Esophagus squamous epithelium (tissue), 5 donors: ENCODE measurements at regions of chr11 and their contacts with region 1.

Region 1: GRCh38 chr11:65512306-65512705 is 12.6 kb upstream of the SCYL1 start:
- DNase-seq: no peak
- H3K4me3 ChIP-seq: no peak overlapping the region
- H3K27ac ChIP-seq: no peak overlapping the region
- H3K4me1 ChIP-seq: peaks cover 0 to 33% (median 14%) of the 10 kb centered on the region in 3 donors
- H3K27me3 ChIP-seq: no peaks in the 10 kb centered on the region
- CTCF ChIP-seq: no peak
- POLR2A ChIP-seq: no peak

Region 2: DNA sequence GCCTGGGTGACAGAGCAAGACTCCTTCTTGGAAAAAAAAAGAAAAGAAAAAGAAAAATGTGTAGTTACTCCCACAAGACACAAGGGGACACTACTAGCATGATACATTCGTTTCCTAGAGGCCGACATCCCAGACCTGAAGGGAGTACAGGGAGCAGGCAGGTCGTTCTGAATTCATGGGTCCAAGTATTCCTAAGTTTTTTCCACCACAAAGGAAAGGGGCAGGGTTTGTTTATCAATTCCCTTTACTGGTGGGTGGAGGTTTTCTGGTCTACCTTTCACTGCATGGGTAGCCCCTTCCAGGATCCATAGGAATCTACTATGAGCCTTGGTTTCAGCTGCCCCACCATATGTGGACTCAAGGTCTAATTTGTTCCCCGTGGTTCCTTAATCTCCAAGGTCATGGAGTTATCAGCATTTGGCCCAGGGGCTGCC is 145.9 kb before region 1 on chr11:
- intact Hi-C with region 1: loop called (anchors 5 kb)
- DNase-seq: no peak
- H3K4me3 ChIP-seq: no peak overlapping the region
- H3K27ac ChIP-seq: no peak overlapping the region
- H3K4me1 ChIP-seq: peaks cover 0 to 8% (median 3%) of the 10 kb centered on the region in 3 donors
- H3K27me3 ChIP-seq: no peaks in the 10 kb centered on the region
- CTCF ChIP-seq: peak; percentile 62 to 90 (median 84)
- POLR2A ChIP-seq: no peak